ENCODE measurements at regions of chr17 and their contacts with region 1.

Region 1: DNA sequence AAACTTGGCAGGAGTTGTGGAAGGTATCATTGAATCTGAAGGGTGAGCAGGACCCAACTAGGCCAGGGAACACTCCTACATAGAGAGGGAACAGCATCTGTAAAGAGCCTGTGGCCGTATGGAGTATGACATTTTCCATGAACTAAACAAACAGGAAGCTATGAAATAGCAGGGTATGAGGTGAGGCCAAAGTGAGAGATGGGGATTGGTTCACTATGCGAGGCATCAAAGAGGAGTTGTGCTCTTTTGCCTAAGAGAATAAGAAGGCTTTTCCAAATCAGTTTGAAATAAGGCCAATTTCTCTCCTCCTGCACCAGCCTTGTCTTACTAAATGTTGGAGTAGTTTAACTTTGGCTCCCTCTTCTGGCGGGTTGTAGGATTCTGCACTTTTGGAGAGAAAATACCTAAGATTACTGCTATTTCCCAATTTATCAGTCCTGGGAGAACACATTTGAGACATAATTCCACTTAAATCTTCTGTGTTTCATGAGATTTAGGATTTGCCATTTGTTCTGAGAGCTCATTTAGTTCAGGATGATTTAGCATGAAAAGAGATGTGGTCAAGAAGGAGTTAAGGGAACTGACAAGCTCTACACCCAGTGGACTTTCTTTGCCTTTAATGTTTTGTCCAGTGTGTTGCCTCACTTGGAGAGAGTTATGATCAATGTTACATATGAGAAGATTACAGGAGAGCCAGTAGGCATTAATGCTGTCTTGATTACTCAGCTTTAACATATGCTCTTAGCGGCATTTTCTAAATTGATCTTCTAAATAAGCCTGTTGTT is 55.4 kb downstream of the TNRC6C start:
- DNase-seq: peak; percentile 62
- H3K4me3 ChIP-seq: no peak overlapping the region
- H3K27ac ChIP-seq: no peak overlapping the region
- H3K4me1 ChIP-seq: no peaks in the 10 kb centered on the region
- H3K27me3 ChIP-seq: no peaks in the 10 kb centered on the region
- CTCF ChIP-seq: peak; percentile 50 to 83 (median 74)
- POLR2A ChIP-seq: no peak

Region 2: GRCh38 chr17:77542551-77543490 is 471.1 kb before region 1 on chr17:
- intact Hi-C with region 1: loop called (anchors 1 kb)
- DNase-seq: peak; percentile 82
- H3K4me3 ChIP-seq: no peak overlapping the region
- H3K27ac ChIP-seq: peak overlapping the region in 1 of 2 donors; percentile 25
- H3K4me1 ChIP-seq: no peaks in the 10 kb centered on the region
- H3K27me3 ChIP-seq: no peaks in the 10 kb centered on the region
- CTCF ChIP-seq: peak; percentile 47 to 89 (median 78)
- POLR2A ChIP-seq: no peak

Measured in prostate gland (tissue), 2 donors.